ENCODE measurements at regions of chr2 and their contacts with region 1.

Region 1: DNA sequence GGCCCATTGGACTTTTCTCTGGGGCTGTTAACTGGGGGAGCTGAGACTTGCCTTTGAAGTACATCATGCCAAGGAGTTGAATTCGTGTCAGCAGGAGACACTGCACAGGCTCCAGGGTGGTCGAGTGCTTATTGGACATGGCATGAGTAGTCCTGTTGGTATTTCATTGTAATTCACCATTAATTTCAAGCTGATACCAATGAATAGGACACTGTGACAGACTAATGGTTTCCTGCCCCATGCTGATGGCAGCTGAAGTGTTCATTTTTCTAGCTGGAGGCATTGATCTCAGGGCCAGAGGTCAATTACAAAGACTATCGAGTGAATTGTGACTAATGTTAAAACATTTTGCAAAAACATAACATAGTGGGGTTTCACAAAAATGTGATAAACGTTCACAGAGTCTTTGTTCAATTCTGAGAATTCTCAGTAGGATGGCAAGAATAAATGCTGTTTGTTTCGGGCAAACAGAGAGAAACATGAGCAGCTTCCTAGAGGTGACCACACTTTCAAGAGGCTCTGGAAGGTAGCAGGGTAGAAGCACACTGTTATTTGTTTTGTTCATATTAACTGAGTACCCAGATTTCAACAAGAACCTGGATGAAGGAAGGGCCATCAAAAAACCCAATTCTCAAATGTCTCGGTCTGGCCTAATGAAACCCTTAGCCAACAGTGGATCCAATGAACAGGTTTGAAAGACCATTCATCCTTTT is 90.6 kb upstream of the ARL4C start:
- DNase-seq: no peak
- ATAC-seq: no peak
- H3K4me3 ChIP-seq: no peak overlapping the region
- H3K27ac ChIP-seq: no peak overlapping the region
- H3K4me1 ChIP-seq: no peaks in the 10 kb centered on the region
- H3K27me3 ChIP-seq: peaks cover 0 to 1% of the 10 kb centered on the region in 2 donors

Region 2: DNA sequence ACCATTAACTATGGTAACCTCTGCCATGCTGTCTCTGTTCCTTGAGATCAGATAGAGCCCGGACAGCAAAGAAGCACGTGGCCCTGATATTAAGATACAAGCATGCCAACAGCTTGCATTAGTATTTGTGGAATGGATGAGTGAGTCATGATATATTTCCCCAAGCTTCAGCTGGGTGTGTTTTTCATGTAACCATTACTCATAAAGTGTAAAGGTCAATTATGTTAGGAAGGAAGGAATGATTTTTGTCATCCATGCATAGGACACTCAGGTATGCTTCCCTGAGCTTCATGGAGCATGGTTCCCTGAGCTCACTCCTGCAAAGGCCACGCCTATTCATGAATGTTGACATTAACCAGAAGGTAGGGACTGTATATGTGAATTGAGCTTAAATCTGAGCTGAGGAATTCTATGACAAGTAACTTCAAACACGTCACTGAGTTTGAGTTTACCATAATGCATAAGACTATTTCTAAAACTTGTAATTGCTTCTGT is 165.2 kb before region 1 on chr2:
- intact Hi-C with region 1: no loop called
- DNase-seq: no peak
- ATAC-seq: no peak
- H3K4me3 ChIP-seq: no peak overlapping the region
- H3K27ac ChIP-seq: no peak overlapping the region
- H3K4me1 ChIP-seq: no peaks in the 10 kb centered on the region
- H3K27me3 ChIP-seq: no peaks in the 10 kb centered on the region

Region 3: GRCh38 chr2:235836491-235836926 is 1249.0 kb after region 1 on chr2:
- intact Hi-C with region 1: loop called in 1 of 2 experiments (anchors 10 kb)
- DNase-seq: no peak
- ATAC-seq: no peak
- H3K4me3 ChIP-seq: no peak overlapping the region
- H3K27ac ChIP-seq: no peak overlapping the region
- H3K4me1 ChIP-seq: no peaks in the 10 kb centered on the region
- H3K27me3 ChIP-seq: no peaks in the 10 kb centered on the region

Measured in aorta (tissue), 5 donors.